PC-3 (cell line): ENCODE measurements at regions of chrX and their contacts with region 1.

Region 1: GRCh38 chrX:51641421-51642021 is 22.8 kb upstream of the CENPVL3 start:
- DNase-seq: peak; percentile 68
- ATAC-seq: peak; percentile 70
- H3K4me3 ChIP-seq: no peak overlapping the region
- H3K27ac ChIP-seq: no peak overlapping the region
- H3K4me1 ChIP-seq: no peaks in the 10 kb centered on the region
- H3K27me3 ChIP-seq: no peaks in the 10 kb centered on the region
- CTCF ChIP-seq: peak; percentile 76

Region 2: DNA sequence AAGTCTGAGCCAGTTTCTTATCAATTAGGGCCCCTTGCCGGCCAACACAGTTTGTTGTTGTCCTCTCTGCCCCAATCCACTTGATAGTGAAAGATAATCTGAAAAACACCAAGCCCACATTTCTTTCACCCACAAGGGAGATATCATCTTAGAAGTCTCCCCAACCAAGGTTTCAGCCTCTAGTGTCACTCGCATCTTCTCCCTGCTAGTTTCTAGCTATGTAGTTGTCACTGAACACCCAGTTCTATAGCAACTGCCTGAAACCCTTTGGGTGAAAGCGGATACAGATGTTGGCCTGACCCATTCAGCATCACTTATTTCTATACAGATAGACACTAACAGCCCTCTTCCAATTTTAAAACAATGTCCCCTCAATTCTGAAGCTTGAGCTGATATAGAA is 614.7 kb before region 1 on chrX:
- CTCF ChIA-PET with region 1: no interaction called
- POLR2A ChIA-PET with region 1: no interaction called
- intact Hi-C with region 1: no loop called
- DNase-seq: no peak
- ATAC-seq: no peak
- H3K4me3 ChIP-seq: no peak overlapping the region
- H3K27ac ChIP-seq: no peak overlapping the region
- H3K4me1 ChIP-seq: no peaks in the 10 kb centered on the region
- H3K27me3 ChIP-seq: no peaks in the 10 kb centered on the region
- CTCF ChIP-seq: no peak

Region 3: DNA sequence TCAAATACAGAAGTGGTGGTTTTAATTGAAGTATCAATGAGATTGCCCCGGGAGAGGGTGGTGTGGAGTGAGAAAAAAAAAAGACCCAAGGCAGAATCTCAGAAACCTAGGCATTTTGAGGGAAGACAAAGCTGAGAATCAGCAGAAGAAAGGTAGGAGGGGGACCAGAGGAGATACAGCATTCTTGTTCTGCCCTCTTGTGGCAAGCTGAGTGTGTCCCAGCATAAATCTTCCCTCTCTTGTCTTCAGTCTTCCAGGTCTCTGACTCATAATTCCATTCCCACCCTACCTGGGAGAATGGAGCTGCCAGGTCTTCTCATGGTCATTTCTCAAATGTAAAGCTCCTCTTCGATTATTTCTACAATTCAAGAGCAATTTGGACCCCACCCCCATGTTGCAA is 219.2 kb after region 1 on chrX:
- CTCF ChIA-PET with region 1: interaction called, 11 read pairs
- POLR2A ChIA-PET with region 1: no interaction called
- intact Hi-C with region 1: loop called (anchors 1 kb)
- DNase-seq: peak; percentile 60
- ATAC-seq: peak; percentile 68
- H3K4me3 ChIP-seq: no peak overlapping the region
- H3K27ac ChIP-seq: no peak overlapping the region
- H3K4me1 ChIP-seq: no peaks in the 10 kb centered on the region
- H3K27me3 ChIP-seq: no peaks in the 10 kb centered on the region
- CTCF ChIP-seq: peak; percentile 66

Region 4: GRCh38 chrX:52261463-52262194 is 620.1 kb after region 1 on chrX:
- CTCF ChIA-PET with region 1: no interaction called
- POLR2A ChIA-PET with region 1: no interaction called
- intact Hi-C with region 1: loop called (anchors 5 kb)
- DNase-seq: peak; percentile 80
- ATAC-seq: peak; percentile 98
- H3K4me3 ChIP-seq: peak overlapping the region; percentile 80
- H3K27ac ChIP-seq: peak overlapping the region; percentile 54
- H3K4me1 ChIP-seq: peaks cover 11% of the 10 kb centered on the region
- H3K27me3 ChIP-seq: no peaks in the 10 kb centered on the region
- CTCF ChIP-seq: peak; percentile 94